HepG2 (cell line): ENCODE measurements at regions of chr17 and their contacts with region 1.

Region 1: DNA sequence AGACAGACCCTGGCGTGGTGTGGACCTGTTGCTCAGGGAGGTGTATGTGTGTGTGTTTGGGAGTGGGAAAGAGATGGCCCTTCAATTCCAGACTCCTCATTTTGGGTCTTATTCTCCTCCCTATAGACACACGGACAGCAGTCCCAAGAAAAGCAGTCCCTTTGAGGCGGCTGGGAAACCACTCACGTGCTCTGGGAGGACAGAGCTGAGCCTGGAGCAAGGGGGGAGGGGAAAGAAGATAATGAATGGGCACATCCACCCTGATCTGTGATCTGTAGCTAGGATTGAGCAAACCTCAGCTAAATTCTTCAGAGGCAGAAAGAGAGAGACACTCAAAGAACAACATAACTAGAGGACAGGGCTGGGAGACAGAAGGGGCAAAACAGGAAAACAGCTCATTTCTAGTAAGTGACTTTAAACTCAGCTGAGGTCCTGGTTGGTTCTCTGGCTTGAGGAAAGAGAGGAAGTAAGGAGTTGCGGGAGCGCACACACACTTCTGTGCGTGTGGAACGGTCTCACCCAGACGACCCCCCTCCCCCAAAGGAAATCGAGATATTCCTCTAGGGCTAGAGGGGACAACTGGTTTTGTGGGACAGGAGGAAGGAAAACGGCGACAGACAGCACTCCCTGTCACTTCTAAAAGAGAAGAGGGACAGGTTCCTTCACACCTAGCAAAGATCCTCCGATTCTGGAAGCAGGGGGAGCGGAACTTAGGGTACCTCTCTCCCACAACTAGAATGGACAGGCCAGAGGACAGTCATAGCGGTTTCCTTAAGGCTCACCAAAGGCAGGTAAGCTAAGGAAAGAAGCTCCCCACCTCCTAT is 658 bp downstream of the RAB5C start:
- DNase-seq: peak; percentile 71
- ATAC-seq: peak; percentile 39
- H3K4me3 ChIP-seq: peak overlapping the region; percentile 95 to 100 (median 97)
- H3K27ac ChIP-seq: peak overlapping the region; percentile 71
- H3K4me1 ChIP-seq: peaks cover 48% of the 10 kb centered on the region
- H3K27me3 ChIP-seq: no peaks in the 10 kb centered on the region; a peak in 1 of 5 replicates
- CTCF ChIP-seq: no peak; the same call in 1 of the 2 replicates
- EP300 ChIP-seq: no peak
- POLR2A ChIP-seq: no peak; a peak in 1 of 4 replicates
- RAD21 ChIP-seq: no peak

Region 2: DNA sequence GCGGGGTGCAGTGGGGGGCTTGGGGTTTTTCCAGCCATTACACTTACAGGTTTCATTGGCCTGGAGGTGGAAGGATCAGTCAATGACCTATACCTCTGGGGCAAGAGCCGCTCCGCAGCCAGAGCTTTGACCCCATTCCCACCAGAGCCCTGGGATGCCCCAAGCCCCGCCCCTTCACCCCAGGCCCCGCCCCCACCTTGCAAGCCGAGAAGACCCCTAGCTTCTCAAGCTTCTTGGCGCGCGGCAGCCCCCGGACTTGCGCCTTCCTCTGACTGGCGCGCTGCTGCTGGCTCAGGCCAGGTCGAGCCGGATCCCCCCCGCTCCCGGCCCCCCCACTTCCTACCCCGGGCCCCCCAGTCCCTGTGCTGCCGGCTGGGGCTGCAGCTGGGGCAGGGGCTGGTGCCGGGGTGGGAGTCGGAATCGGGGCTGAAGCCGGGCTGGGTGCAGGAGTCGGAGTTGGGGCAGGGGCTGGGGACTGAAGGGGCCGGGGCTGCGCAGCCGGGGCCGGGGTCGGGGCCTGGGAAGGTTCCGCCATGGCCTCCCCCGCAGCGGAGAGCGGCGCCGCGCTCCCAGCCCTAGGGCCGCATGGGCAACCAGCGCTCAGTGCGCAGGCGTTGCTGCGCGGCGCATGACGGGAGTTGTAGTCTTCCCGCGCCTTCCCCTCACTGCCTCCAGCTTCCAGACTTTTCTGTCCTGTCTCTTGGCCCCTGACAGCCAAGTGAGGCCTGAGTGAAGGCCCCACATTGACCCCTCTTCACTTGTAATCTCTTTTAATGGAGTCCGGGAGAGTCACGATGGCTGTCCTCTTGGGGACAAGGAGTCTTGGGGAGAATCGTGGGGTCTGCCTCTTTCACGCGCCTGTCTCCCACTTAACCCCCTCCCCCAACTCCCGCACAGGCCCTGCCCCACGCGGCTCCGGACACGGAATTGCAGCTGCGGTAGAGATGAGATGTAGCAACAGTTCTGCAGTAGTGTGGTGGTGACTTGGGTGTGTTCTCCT is 33.1 kb before region 1 on chr17 and contains the start of gene KAT2A:
- CTCF ChIA-PET with region 1: no interaction called
- POLR2A ChIA-PET with region 1: interaction called, 20 read pairs
- in situ Hi-C with region 1: no loop called
- intact Hi-C with region 1: loop called (anchors 5 kb)
- DNase-seq: peak; percentile 73
- ATAC-seq: peak; percentile 90
- H3K4me3 ChIP-seq: peak within 1 kb of the TSS; percentile 76 to 85 (median 79)
- H3K27ac ChIP-seq: peak within 1 kb of the TSS; percentile 68
- H3K4me1 ChIP-seq: peaks cover 30% of the 10 kb centered on the region
- H3K27me3 ChIP-seq: no peaks in the 10 kb centered on the region
- CTCF ChIP-seq: 0 out of 2 replicates have a peak, but pooled peaks have one; percentile 26
- EP300 ChIP-seq: peak in 1 of 2 experiments; percentile 46; a peak in 2 of 4 replicates
- POLR2A ChIP-seq: peak; percentile 76 to 95
- RAD21 ChIP-seq: no peak
- total RNA-seq, gene KAT2A: 20.2 and 29.1 TPM in 2 replicates

Region 3: DNA sequence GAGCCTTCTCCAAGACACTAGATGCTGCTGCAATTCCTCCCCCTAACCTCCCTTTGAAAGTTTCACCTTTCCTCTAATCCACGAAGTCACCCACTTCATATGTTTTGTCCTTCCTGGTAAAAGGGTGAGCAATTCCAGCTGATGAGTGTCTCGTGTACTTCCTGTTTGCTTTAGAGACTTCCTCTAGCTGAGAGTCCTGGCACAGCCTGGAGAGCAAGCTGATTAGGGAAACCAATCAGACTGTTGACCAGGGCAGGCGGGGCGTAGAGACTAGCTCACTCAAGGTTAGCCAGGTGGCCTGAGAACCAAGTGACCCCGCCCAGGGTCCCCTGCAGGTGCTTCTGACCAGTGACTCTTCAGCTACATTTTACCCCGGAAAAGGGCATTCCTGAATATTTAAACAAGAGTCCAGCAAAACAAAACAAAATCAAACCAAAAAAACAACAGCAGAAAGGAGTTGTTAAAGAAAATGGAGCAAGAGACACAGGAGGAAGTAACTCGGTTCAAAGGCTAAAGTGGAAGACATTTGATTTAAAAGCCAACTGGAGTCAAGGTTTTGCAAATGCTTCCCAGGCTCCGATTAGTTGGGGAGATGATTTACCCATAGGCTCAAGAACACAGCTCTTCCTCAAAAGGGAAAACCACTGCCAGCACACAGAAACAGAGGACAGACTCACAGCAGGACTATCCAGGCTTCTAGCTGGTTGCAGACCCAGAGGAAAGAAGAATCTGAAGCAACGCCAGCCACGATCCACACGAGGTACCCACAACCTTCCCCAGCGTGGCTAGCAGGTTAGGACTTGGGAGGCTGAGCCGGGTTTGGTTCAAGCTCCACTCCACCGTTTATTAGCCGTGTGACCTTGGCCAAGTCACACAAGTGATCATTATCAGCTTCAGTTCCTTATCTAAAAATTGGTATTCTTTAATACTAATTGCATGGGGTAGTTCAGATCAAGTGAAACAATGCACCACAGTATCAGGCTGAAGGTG is 18.2 kb before region 1 on chr17:
- CTCF ChIA-PET with region 1: no interaction called
- POLR2A ChIA-PET with region 1: interaction called, 14 read pairs
- in situ Hi-C with region 1: no loop called
- intact Hi-C with region 1: no loop called
- DNase-seq: peak; percentile 91
- ATAC-seq: peak; percentile 95
- H3K4me3 ChIP-seq: no peak overlapping the region; a peak in 1 of 6 replicates
- H3K27ac ChIP-seq: peak overlapping the region; percentile 56
- H3K4me1 ChIP-seq: peaks cover 49% of the 10 kb centered on the region
- H3K27me3 ChIP-seq: no peaks in the 10 kb centered on the region
- CTCF ChIP-seq: peak; percentile 22; the same call in 1 of the 2 replicates
- EP300 ChIP-seq: peak in 1 of 2 experiments; percentile 27; a peak in 1 of 4 replicates
- POLR2A ChIP-seq: no peak
- RAD21 ChIP-seq: no peak

Region 4: DNA sequence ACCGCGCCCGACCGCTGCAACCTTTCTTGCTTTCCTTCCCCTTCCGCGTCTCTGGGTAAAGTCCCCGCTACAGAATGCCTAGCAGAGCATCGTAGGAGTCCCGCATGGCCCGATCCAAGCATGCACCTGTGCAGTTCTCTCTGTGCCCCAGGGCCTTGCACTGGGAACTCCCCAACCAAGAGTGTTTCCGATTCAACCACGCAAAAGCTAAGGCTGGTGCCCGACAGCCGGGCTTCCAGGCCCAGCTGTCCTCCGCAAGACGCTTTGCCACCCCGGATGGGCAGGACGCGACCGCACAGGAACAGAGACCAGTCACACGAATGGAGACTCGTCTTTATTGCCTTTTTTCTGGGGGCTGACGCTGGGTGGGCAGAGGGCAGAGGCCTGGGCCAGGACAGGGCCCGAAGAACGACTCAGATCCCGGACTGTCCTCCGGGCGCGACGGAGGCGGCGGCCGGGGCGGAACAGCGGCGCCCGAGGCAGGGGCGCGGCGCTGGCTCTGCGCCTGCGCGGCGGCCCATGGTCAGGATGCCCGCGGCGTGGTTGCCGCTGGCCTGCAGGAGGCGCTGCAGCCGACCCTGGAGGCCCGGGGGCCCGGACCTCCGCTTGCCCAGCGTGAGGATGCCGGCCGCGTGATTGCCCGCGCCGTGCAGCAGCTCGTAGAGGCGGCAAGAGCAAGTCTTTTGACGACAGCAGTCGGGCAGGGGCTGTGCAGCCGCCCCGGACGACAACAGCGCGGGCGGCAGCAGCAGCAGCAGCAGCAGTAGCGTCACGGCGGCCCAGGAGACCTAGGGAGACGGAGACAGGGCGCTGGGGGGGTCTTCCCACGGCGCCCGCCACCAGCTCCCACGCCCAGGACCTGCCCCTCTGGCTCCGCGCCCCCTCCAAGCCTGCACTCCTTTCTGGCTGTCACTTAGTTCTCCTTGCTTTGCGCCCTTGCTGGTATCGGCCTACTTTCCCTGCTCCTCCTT is 29.9 kb after region 1 on chr17:
- CTCF ChIA-PET with region 1: no interaction called
- POLR2A ChIA-PET with region 1: interaction called, 10 read pairs
- in situ Hi-C with region 1: no loop called
- intact Hi-C with region 1: no loop called
- DNase-seq: peak; percentile 70
- ATAC-seq: peak; percentile 78
- H3K4me3 ChIP-seq: peak overlapping the region; percentile 73 to 88 (median 84)
- H3K27ac ChIP-seq: peak overlapping the region; percentile 43
- H3K4me1 ChIP-seq: peaks cover 52% of the 10 kb centered on the region
- H3K27me3 ChIP-seq: peaks cover 0 to 21% of the 10 kb centered on the region in 2 experiments; a peak in 4 of 5 replicates
- CTCF ChIP-seq: peak; percentile 90
- EP300 ChIP-seq: 0 out of 4 replicates have a peak, but pooled peaks of 1 of the 2 experiments have one; percentile 19
- POLR2A ChIP-seq: peak; percentile 51 to 74; a peak in 2 of 4 replicates
- RAD21 ChIP-seq: peak; percentile 94

Region 5: GRCh38 chr17:42399121-42399520 is 245.0 kb after region 1 on chr17:
- CTCF ChIA-PET with region 1: no interaction called
- POLR2A ChIA-PET with region 1: no interaction called
- in situ Hi-C with region 1: no loop called
- intact Hi-C with region 1: no loop called
- DNase-seq: no peak
- ATAC-seq: no peak
- H3K4me3 ChIP-seq: no peak overlapping the region
- H3K27ac ChIP-seq: no peak overlapping the region
- H3K4me1 ChIP-seq: peaks cover 38% of the 10 kb centered on the region
- H3K27me3 ChIP-seq: no peaks in the 10 kb centered on the region
- CTCF ChIP-seq: no peak
- EP300 ChIP-seq: no peak
- POLR2A ChIP-seq: no peak
- RAD21 ChIP-seq: no peak